ENCODE measurements at regions of chr1 and their contacts with region 1.

Region 1: GRCh38 chr1:32013386-32014198 is at the start of gene KHDRBS1:
- DNase-seq: peak; percentile 99
- ATAC-seq: peak; percentile 90
- H3K4me3 Mint-ChIP-seq: peak within 1 kb of the TSS; percentile 97
- H3K27ac Mint-ChIP-seq: peak within 1 kb of the TSS; percentile 95
- H3K4me1 Mint-ChIP-seq: peaks cover 27% of the 10 kb centered on the region
- H3K27me3 Mint-ChIP-seq: no peaks in the 10 kb centered on the region
- total RNA-seq, gene KHDRBS1: 198 to 206 TPM

Region 2: DNA sequence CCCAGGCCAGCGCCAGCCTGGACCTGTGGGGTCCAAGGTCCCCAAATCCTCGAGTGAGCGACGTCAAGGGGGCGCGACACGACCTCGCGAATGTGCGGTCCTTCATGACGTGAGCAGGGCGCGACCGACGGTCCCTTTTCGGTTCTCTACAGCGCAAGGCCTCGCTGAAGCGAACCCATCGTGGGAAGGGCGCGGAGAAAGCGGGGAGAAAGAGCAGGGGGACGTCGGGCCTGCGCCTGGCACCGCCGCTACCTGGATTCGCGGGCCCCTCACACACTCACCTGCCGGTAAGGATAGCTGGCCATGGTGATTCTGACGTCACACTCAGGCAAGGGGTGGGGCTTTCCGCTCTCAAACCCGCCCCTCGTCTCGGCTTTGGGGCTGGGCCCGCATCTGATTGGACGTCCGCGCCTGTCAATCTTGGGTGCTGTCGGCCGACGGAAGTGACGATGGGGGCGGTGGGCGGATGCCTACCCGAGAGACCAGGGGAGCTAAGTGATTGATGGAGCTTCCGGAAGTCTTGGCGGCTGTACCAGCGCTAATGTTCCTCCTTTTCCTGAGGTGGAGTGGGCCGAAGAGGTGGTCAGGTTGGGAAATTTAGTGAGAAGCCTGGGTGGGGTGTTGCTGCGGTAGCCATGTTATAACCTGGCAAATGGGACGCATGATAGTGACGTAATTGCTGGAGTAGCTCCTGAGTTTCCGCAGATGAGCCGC is 368.9 kb before region 1 on chr1 and contains the start of gene PEF1:
- CTCF ChIA-PET with region 1: no interaction called
- POLR2A ChIA-PET with region 1: no interaction called
- intact Hi-C with region 1: loop called in 1 of 2 experiments (anchors 1 kb)
- DNase-seq: peak; percentile 100
- ATAC-seq: peak; percentile 91
- H3K4me3 Mint-ChIP-seq: peak within 1 kb of the TSS; percentile 95
- H3K27ac Mint-ChIP-seq: peak within 1 kb of the TSS; percentile 100
- H3K4me1 Mint-ChIP-seq: peaks cover 23% of the 10 kb centered on the region
- H3K27me3 Mint-ChIP-seq: no peaks in the 10 kb centered on the region
- total RNA-seq, gene PEF1: 48.8 to 59.3 TPM

Region 3: DNA sequence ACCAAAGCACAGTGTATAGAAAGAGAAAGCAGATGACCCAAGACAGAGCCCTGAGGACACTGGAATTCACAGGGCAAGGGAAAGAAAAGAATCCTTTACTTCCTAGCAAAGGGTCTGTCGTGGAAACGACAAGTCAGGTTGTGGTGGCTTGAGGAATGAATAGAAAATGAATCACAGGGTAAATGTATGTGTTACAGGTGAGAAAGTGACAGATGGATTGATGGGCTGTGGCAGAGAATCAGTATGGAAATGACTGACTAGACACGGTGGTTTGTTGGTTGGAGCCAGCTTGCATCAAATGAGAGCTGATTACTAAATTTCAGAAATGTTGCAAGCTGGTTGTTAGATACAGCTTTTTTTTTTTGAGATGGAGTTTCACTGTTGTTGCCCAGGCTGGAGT is 122.3 kb before region 1 on chr1:
- CTCF ChIA-PET with region 1: no interaction called
- POLR2A ChIA-PET with region 1: interaction called, 3 read pairs
- intact Hi-C with region 1: loop called in 1 of 2 experiments (anchors 1 kb)
- DNase-seq: peak; percentile 79
- ATAC-seq: peak; percentile 81
- H3K4me3 Mint-ChIP-seq: peak overlapping the region; percentile 11
- H3K27ac Mint-ChIP-seq: peak overlapping the region; percentile 94
- H3K4me1 Mint-ChIP-seq: peaks cover 39% of the 10 kb centered on the region
- H3K27me3 Mint-ChIP-seq: no peaks in the 10 kb centered on the region

Region 4: DNA sequence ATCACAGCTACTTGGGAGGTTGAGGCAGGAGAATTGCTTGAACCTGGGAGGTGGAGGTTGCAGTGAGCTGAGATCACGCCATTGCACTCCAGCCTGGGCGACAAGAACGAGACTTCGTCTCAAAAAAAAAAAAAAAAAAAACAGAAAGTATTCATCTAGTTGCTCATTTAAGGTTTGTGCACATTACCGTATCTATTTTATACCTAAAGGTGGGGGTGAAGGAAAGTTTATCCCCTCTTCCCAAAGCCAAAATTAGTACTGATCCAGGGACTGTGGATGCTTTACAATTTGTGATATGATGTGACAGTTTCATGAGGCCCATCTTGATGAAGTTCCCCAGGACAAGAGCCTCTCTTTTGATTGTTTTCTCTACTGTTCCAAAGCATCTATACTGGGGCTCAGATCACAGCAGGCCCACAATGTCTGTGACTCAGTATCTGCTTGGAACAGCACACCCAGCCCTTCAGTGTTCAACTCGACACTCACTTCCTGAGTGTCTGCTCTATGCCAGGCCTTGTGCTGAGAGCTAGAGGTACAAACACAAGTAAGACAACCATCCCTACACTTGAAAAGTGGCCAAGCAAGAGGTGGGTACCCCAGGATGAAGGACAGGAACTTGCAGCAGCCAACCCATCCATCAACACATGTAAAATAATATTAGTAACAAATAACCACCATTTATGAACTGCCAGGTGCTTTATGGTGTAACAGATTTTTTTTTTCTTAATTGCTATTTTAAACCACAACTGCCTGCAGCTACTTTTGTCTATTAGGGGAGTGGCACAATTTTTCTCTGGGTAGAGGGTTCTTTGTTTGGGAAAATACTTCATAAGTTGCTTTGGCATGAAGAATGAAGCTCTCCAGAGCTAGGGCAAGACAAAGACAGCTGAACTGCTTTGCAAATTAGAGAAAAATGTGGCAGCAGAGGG is 28.9 kb before region 1 on chr1:
- CTCF ChIA-PET with region 1: no interaction called
- POLR2A ChIA-PET with region 1: interaction called, 3 read pairs
- intact Hi-C with region 1: loop called in 1 of 2 experiments (anchors 2 kb)
- DNase-seq: peak; percentile 67
- ATAC-seq: peak; percentile 90
- H3K4me3 Mint-ChIP-seq: peak overlapping the region; percentile 7
- H3K27ac Mint-ChIP-seq: peak overlapping the region; percentile 94
- H3K4me1 Mint-ChIP-seq: peaks cover 51% of the 10 kb centered on the region
- H3K27me3 Mint-ChIP-seq: no peaks in the 10 kb centered on the region

Region 5: DNA sequence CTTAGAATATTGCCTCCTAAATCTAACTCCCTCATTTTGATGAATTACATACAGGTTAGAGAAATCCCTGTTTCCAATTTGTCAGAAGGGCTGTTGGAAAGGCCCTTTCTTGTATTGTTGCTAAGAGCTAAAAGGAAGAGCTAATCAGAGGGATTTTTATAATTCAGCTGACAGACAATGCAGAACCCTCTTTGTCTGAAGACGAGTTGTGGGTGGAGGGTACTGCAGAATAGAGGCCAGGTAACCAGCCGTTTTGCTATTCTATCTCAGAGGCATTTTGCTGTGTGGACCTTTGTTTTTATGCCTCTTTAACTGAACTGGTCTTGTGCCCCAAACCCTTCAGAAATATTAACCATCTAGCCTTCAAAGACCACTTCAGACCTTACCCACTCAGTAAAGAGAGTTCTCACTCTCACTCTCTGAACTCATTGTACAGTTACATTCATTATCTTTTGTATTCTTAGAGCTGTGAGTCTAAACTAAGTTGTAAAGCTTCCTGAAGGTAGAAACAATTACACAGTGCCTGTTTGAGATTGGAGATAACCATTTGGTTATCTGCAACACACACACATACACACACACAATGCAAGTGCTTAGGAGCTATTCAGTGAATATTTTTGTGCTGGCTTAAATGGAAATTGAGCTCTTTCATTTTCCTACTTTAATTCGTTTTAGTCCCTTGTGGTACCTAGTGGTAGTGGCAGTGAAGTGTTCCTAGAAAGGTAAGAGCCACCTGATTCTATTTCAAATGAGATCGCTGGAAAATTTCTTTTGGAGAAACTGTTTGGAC is 114.0 kb after region 1 on chr1:
- CTCF ChIA-PET with region 1: no interaction called
- POLR2A ChIA-PET with region 1: no interaction called
- intact Hi-C with region 1: no loop called
- DNase-seq: no peak
- ATAC-seq: no peak
- H3K4me3 Mint-ChIP-seq: no peak overlapping the region
- H3K27ac Mint-ChIP-seq: peak overlapping the region; percentile 33
- H3K4me1 Mint-ChIP-seq: peaks cover 41% of the 10 kb centered on the region
- H3K27me3 Mint-ChIP-seq: no peaks in the 10 kb centered on the region

Region 6: GRCh38 chr1:32179443-32180185 is 166.0 kb after region 1 on chr1 and contains the start of gene TXLNA:
- CTCF ChIA-PET with region 1: no interaction called
- POLR2A ChIA-PET with region 1: interaction called, 3 read pairs
- intact Hi-C with region 1: loop called in 1 of 2 experiments (anchors 1 kb)
- DNase-seq: peak; percentile 96
- ATAC-seq: peak; percentile 93
- H3K4me3 Mint-ChIP-seq: peak within 1 kb of the TSS; percentile 86
- H3K27ac Mint-ChIP-seq: peak within 1 kb of the TSS; percentile 98
- H3K4me1 Mint-ChIP-seq: peaks cover 44% of the 10 kb centered on the region
- H3K27me3 Mint-ChIP-seq: no peaks in the 10 kb centered on the region
- total RNA-seq, gene TXLNA: 79.5 to 79.7 TPM

Region 7: GRCh38 chr1:32291708-32292492 is 278.3 kb after region 1 on chr1 and contains the start of gene HDAC1:
- CTCF ChIA-PET with region 1: no interaction called
- POLR2A ChIA-PET with region 1: no interaction called
- intact Hi-C with region 1: loop called in 1 of 2 experiments (anchors 1 kb)
- DNase-seq: peak; percentile 99
- ATAC-seq: peak; percentile 98
- H3K4me3 Mint-ChIP-seq: peak within 1 kb of the TSS; percentile 100
- H3K27ac Mint-ChIP-seq: peak within 1 kb of the TSS; percentile 99
- H3K4me1 Mint-ChIP-seq: peaks cover 43% of the 10 kb centered on the region
- H3K27me3 Mint-ChIP-seq: no peaks in the 10 kb centered on the region
- total RNA-seq, gene HDAC1: 132 to 146 TPM

Measured in activated CD4-positive, alpha-beta T cell treated with anti-CD3 and anti-CD28 coated beads for 36 hours (primary cell).